Upper lobe of right lung (tissue), 1 donor: ENCODE measurements at regions of chr13 and their contacts with region 1.

Region 1: GRCh38 chr13:43905435-43906031 is 25.8 kb downstream of the LACC1 start:
- DNase-seq: no peak
- ATAC-seq: peak; percentile 89
- H3K4me3 ChIP-seq: no peak overlapping the region
- H3K27ac ChIP-seq: no peak overlapping the region
- H3K4me1 ChIP-seq: no peaks in the 10 kb centered on the region
- H3K27me3 ChIP-seq: no peaks in the 10 kb centered on the region
- CTCF ChIP-seq: peak; percentile 86

Region 2: GRCh38 chr13:44470638-44471562 is 565.4 kb after region 1 on chr13:
- intact Hi-C with region 1: loop called (anchors 10 kb)
- DNase-seq: no peak
- ATAC-seq: no peak
- H3K4me3 ChIP-seq: no peak overlapping the region
- H3K27ac ChIP-seq: no peak overlapping the region
- H3K4me1 ChIP-seq: peaks cover 8% of the 10 kb centered on the region
- H3K27me3 ChIP-seq: no peaks in the 10 kb centered on the region
- CTCF ChIP-seq: peak; percentile 59